Calu3 (cell line): ENCODE measurements at regions of chr11 and their contacts with region 1.

Region 1: GRCh38 chr11:62508268-62509058 is 38.1 kb downstream of the AHNAK start:
- DNase-seq: peak; percentile 74
- H3K4me3 Mint-ChIP-seq: peak overlapping the region; percentile 53
- H3K27ac Mint-ChIP-seq: peak overlapping the region; percentile 7
- H3K4me1 Mint-ChIP-seq: peaks cover 13% of the 10 kb centered on the region
- H3K27me3 Mint-ChIP-seq: no peaks in the 10 kb centered on the region
- CTCF ChIP-seq: peak; percentile 47

Region 2: DNA sequence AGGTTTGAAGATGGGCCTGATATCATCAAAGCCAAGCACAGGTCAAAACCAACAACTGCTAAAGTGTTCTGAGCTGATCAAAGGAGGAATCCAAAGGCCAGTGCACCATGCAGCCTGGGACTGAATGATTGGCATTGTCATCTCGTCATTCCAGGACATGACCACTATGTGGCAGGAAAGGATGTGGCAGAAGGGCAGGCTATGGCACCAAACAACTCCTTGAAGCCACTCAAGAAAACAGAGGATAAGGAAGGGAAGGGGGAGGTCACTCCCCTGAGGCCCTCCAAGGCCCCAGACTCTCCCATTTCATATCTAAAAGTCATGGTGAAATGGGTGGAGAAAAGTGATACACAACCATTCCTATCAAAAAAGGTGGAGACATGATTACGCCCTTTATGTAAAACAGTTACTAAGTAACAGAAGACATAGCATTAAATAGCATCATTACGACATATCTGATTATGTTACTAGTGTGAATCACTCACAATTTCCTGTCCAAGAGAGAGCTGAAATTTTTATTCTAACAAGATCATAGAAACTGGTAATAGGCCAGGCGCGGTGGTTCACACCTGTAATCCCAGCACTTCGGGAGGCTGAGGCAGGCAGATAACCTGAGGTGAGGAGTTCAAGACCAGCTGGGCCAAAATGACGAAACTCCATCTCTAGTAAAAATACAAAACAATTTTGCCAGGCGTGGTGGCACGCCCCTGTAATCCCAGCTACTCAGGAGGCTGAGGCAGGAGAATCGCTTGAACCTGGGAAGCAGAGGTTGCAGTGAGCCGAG is 11.1 kb before region 1 on chr11:
- CTCF ChIA-PET with region 1: interaction called, 18 read pairs
- intact Hi-C with region 1: no loop called
- DNase-seq: peak; percentile 62
- H3K4me3 Mint-ChIP-seq: no peak overlapping the region
- H3K27ac Mint-ChIP-seq: peak overlapping the region; percentile 35
- H3K4me1 Mint-ChIP-seq: peaks cover 32% of the 10 kb centered on the region
- H3K27me3 Mint-ChIP-seq: no peaks in the 10 kb centered on the region
- CTCF ChIP-seq: peak; percentile 69